Activated CD4-positive, alpha-beta memory T cell treated with anti-CD3 and anti-CD28 coated beads for 36 hours (primary cell): ENCODE measurements at regions of chr1 and their contacts with region 1.

Region 1: GRCh38 chr1:221829327-221830015 is 87.6 kb upstream of the DUSP10 start:
- DNase-seq: peak; percentile 83
- H3K4me3 Mint-ChIP-seq: peak overlapping the region; percentile 30
- H3K27ac Mint-ChIP-seq: peak overlapping the region; percentile 90
- H3K4me1 Mint-ChIP-seq: peaks cover 53% of the 10 kb centered on the region
- H3K27me3 Mint-ChIP-seq: no peaks in the 10 kb centered on the region

Region 2: DNA sequence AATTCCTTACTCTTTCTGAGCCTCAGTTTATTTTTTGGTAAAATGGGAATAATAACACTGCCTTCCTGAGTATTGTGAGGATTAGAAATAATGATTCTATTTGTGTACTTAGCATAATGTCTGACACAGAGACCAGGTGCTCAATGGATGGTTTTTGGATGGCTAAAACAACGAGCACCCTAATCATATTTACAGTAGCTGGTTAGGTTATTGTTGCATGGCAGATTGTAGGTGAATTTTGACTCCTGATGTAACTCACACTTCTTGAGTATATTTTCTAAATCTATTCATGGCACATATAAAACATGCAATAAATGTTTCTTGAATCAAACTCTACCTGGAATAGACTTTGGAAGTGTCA is 75.7 kb before region 1 on chr1:
- CTCF ChIA-PET with region 1: no interaction called
- POLR2A ChIA-PET with region 1: no interaction called
- intact Hi-C with region 1: loop called (anchors 1 kb)
- DNase-seq: no peak
- H3K4me3 Mint-ChIP-seq: no peak overlapping the region
- H3K27ac Mint-ChIP-seq: peak overlapping the region; percentile 19
- H3K4me1 Mint-ChIP-seq: peaks cover 33% of the 10 kb centered on the region
- H3K27me3 Mint-ChIP-seq: no peaks in the 10 kb centered on the region

Region 3: GRCh38 chr1:221809031-221810029 is 20.1 kb before region 1 on chr1:
- CTCF ChIA-PET with region 1: interaction called, 3 read pairs
- POLR2A ChIA-PET with region 1: interaction called, 5 read pairs
- intact Hi-C with region 1: loop called (anchors 2 kb)
- DNase-seq: no peak
- H3K4me3 Mint-ChIP-seq: no peak overlapping the region
- H3K27ac Mint-ChIP-seq: no peak overlapping the region
- H3K4me1 Mint-ChIP-seq: peaks cover 35% of the 10 kb centered on the region
- H3K27me3 Mint-ChIP-seq: no peaks in the 10 kb centered on the region

Region 4: DNA sequence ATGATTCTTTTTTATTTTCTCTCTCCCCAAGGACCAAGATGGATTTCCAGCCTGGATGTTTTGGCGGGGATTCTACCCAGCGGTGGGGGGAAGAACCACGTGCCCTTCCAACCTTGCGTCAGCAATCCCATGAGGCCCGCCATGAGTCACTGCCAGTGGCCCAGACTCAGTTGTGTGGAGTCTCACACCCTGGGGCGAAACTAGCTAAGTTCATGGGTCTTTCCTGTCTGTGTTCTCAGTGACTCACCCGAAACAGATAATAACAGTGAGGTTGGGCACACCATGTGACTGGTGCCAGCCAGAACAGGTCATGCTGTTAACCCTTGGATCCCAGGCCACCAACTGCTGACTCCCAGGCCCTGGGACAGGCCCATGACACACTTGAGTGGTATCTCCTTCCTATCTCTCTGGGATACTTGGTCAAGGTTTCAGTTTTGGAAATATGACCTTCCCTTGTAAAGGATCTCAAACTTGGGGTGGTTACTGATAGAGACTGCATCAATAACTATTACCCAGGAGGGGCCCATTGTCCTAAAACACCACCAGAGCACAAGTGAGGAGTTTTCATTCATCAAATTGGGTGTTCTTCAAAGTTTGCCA is 10.4 kb after region 1 on chr1:
- CTCF ChIA-PET with region 1: interaction called, 3 read pairs
- POLR2A ChIA-PET with region 1: interaction called, 9 read pairs
- intact Hi-C with region 1: loop called (anchors 1 kb)
- DNase-seq: peak; percentile 88
- H3K4me3 Mint-ChIP-seq: no peak overlapping the region
- H3K27ac Mint-ChIP-seq: peak overlapping the region; percentile 74
- H3K4me1 Mint-ChIP-seq: peaks cover 38% of the 10 kb centered on the region
- H3K27me3 Mint-ChIP-seq: peaks cover 6% of the 10 kb centered on the region

Region 5: GRCh38 chr1:221858818-221859611 is 29.5 kb after region 1 on chr1:
- CTCF ChIA-PET with region 1: no interaction called
- POLR2A ChIA-PET with region 1: interaction called, 3 read pairs
- intact Hi-C with region 1: loop called (anchors 1 kb)
- DNase-seq: peak; percentile 25
- H3K4me3 Mint-ChIP-seq: no peak overlapping the region
- H3K27ac Mint-ChIP-seq: no peak overlapping the region
- H3K4me1 Mint-ChIP-seq: peaks cover 14% of the 10 kb centered on the region
- H3K27me3 Mint-ChIP-seq: no peaks in the 10 kb centered on the region